PC-9 (cell line): ENCODE measurements at regions of chr16 and their contacts with region 1.

Region 1: DNA sequence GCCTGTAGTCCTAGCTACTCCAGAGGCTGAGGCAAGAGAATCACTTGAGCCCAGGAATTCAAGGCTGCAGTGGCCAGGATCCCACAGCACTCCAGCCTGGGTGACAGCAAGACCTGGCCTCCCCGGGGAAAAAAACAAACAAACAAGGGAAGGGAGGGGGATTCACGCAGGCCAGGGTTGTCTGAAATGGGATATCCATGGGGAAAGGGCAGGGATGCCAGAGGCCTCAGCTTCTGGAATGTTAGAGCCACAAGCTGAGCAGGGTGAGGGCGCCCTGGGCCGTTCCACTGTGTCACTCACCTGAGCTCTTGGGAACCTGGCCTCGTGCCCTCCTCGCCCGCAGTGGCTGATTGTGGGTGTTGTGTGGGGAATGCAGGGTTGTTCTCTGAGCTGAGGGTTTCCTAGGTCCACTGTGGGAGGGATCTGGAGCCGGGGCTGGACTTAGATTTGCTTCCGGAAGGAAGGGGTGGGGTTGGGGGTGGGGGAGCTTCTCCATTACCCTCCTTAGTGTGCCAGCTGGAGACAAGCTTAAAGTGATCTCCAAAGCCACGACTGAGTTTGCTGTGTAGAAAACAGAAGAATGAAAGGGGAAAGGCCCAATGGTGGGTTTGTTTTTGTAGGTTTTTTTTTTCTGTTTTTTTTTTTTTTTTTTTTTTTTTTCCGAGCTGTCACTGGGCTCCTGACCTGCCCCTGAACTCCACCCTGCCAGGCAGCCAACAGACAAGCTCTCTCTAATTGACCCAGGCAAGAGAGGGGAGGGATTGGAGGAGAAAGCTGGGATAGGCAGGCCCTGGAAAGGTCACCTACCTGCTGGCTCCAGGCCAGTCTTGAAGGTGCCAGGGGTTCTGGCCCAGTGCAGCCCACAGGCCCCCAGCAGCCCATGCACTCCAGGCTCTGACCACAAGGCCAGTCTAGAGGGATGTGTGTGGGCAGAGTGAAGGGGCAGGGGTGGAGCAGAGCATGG is at the start of gene SULT1A1:
- DNase-seq: peak; percentile 85 to 98
- H3K4me3 ChIP-seq: peak within 1 kb of the TSS; percentile 26; the same call in 1 of the 2 replicates
- H3K27ac ChIP-seq: peak within 1 kb of the TSS; percentile 69
- H3K4me1 ChIP-seq: peaks cover 25% of the 10 kb centered on the region
- H3K27me3 ChIP-seq: no peaks in the 10 kb centered on the region
- CTCF ChIP-seq: no peak
- total RNA-seq, gene SULT1A1: 82.0 and 98.8 TPM in 2 replicates

Region 2: DNA sequence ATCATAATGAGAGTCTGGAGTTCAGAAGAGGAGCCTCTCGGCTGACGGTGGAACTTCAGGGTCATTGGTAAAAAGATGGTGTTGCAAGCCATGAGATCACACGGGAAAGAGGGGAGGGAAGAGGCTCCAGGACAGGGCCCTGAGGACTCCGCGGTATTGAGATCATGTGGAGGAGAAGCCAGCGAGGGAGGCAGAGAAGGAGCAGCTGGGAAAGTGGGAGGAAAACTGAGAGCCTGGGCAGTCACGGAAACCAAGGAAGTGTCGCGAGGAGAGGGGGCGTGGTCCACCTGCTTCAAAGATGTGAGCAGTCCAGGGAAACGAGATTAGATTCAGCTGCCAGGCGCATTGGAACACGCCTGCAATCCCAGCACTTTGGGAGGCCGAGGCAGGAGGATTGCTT is 345.3 kb before region 1 on chr16:
- CTCF ChIA-PET with region 1: no interaction called
- POLR2A ChIA-PET with region 1: interaction called, 25 read pairs
- intact Hi-C with region 1: no loop called
- DNase-seq: peak; percentile 63 to 68
- H3K4me3 ChIP-seq: no peak overlapping the region; the same call in 1 of the 2 replicates
- H3K27ac ChIP-seq: no peak overlapping the region
- H3K4me1 ChIP-seq: peaks cover 6% of the 10 kb centered on the region; the same call in 1 of the 2 replicates
- H3K27me3 ChIP-seq: no peaks in the 10 kb centered on the region
- CTCF ChIP-seq: no peak

Region 3: DNA sequence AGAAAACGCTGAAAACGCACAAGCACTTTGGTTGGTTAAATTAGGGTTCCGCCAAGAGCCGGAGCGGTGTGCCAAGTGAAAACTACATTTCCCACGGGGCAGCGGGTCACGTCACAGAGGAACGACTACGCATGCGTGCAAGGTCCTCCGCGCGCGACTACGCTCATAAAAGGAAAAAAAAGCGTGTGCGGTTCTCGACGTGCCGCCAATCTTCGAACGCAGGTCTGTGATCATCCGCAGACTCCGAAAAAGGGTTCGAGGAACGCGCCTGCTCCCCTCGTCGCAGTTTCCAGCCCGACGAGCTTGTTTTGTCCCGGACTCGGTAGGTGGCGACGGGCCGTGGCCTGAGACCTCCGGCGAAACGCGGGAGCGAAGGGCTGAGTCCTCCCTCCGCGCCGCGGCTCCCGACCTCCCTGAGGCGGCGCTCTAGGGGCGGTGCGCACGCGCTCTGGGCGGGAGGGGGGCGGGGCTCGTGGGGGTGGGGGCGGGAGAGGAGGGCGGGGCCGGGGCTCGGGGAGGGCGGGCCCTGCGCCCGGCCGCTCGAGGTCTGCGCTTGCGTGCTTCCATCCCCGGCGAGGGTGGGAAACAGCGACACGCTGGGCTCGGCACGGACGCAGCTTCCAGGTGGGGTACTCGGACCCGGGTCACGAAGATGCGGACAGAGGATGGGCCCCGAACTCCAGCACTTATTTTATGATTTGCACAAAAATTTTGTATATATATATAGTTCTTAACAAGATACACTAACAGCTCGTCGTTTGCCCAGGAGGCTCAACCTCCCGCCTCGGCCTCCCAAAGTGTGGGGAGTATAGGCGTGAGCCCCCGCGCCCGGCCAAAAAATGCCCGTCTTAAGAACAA is 55.9 kb before region 1 on chr16 and contains the start of gene SGF29:
- CTCF ChIA-PET with region 1: interaction called, 15 read pairs
- POLR2A ChIA-PET with region 1: interaction called, 3 read pairs
- intact Hi-C with region 1: loop called (anchors 5 kb)
- DNase-seq: peak; percentile 72 to 94
- H3K4me3 ChIP-seq: peak within 1 kb of the TSS; percentile 74
- H3K27ac ChIP-seq: peak within 1 kb of the TSS; percentile 93
- H3K4me1 ChIP-seq: peaks cover 16% of the 10 kb centered on the region
- H3K27me3 ChIP-seq: no peaks in the 10 kb centered on the region
- CTCF ChIP-seq: peak; percentile 36; the same call in 1 of the 2 replicates
- total RNA-seq, gene SGF29: 45.3 and 51.1 TPM in 2 replicates

Region 4: DNA sequence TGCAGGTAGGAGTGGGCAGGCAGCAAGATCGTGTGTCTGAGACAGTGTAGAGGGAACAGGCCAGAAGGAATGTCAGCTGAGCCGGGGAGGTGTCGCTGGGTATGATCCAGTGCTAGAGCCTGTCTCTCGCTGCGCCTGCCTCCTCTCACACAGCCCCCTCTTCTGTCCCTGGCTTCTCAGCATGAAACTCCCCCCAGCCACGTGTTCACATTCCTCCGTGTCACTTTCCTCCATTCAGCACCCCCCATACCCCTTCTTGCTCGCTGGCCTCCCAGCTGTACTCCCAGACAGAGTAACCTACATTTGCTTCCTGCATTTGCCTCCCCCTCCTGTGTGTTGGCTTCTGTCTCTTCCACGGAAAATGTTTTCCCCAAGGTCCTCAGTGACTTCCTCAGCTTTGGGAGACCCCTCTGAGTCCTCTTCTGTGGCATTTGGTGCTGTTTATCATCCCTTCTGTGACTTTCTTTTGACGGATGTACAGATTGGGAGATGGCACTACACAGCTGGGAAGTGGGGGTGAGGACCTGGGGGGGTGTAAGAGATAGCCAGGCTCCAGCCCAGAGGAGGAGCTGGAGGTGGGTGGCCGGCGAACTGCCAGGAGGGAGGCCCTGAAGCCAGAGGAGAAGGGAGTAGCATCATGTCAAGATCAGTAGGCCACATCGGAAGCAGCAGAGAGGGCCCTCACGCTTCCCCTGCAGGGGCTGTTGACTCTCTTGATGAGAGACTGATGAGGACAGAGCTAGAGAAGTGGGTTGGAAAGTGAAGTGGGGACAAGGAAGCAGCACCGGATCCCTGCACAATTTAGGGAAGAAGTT is 37.0 kb before region 1 on chr16:
- CTCF ChIA-PET with region 1: no interaction called
- POLR2A ChIA-PET with region 1: no interaction called
- intact Hi-C with region 1: no loop called
- DNase-seq: no peak
- H3K4me3 ChIP-seq: no peak overlapping the region
- H3K27ac ChIP-seq: no peak overlapping the region
- H3K4me1 ChIP-seq: no peaks in the 10 kb centered on the region
- H3K27me3 ChIP-seq: no peaks in the 10 kb centered on the region
- CTCF ChIP-seq: no peak

Region 5: GRCh38 chr16:28597692-28598261 is 12.1 kb before region 1 on chr16:
- CTCF ChIA-PET with region 1: interaction called, 21 read pairs
- POLR2A ChIA-PET with region 1: interaction called, 59 read pairs
- intact Hi-C with region 1: no loop called
- DNase-seq: peak; percentile 68 to 70
- H3K4me3 ChIP-seq: peak overlapping the region; percentile 36; the same call in 1 of the 2 replicates
- H3K27ac ChIP-seq: peak overlapping the region; percentile 94
- H3K4me1 ChIP-seq: peaks cover 34% of the 10 kb centered on the region
- H3K27me3 ChIP-seq: no peaks in the 10 kb centered on the region
- CTCF ChIP-seq: peak; percentile 34; the same call in 1 of the 2 replicates

Region 6: GRCh38 chr16:30370444-30371247 is 1760.7 kb after region 1 on chr16 and contains the start of gene TBC1D10B:
- CTCF ChIA-PET with region 1: no interaction called
- POLR2A ChIA-PET with region 1: interaction called, 23 read pairs
- intact Hi-C with region 1: no loop called
- DNase-seq: peak; percentile 100
- H3K4me3 ChIP-seq: peak within 1 kb of the TSS; percentile 75
- H3K27ac ChIP-seq: no peak within 1 kb of the TSS
- H3K4me1 ChIP-seq: peaks cover 22% of the 10 kb centered on the region
- H3K27me3 ChIP-seq: no peaks in the 10 kb centered on the region
- CTCF ChIP-seq: no peak; the same call in 1 of the 2 replicates
- total RNA-seq, gene TBC1D10B: 85.0 and 90.8 TPM in 2 replicates